Activated CD8-positive, alpha-beta T cell treated with anti-CD3 and anti-CD28 coated beads, Interleukin-2, amount 10 ng/mL, durations not matched to agents 7 days and 5 days (primary cell): ENCODE measurements at regions of chr21 and their contacts with region 1.

Region 1: DNA sequence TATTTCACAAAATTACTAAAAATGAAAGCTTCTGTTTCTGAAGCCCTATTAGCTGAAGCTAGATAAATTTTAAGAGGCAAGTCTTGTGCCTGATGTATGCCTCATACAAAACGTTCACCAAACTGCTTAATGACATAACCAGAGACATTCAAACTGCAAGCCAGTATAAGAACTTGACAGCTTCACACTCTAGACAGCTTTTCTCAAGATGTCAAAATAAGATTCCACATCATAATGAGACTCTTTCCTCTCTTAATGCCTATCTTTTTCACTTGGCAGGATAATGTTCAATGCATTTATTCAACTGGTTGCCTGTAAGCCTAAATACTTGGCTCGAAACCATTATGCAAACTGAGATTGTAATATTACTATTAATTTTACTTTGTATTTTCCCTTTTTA is 424.0 kb downstream of the LTN1 start:
- DNase-seq: no peak
- ATAC-seq: no peak
- H3K4me3 Mint-ChIP-seq: no peak overlapping the region
- H3K27ac Mint-ChIP-seq: no peak overlapping the region
- H3K4me1 Mint-ChIP-seq: no peaks in the 10 kb centered on the region
- H3K27me3 Mint-ChIP-seq: no peaks in the 10 kb centered on the region

Region 2: DNA sequence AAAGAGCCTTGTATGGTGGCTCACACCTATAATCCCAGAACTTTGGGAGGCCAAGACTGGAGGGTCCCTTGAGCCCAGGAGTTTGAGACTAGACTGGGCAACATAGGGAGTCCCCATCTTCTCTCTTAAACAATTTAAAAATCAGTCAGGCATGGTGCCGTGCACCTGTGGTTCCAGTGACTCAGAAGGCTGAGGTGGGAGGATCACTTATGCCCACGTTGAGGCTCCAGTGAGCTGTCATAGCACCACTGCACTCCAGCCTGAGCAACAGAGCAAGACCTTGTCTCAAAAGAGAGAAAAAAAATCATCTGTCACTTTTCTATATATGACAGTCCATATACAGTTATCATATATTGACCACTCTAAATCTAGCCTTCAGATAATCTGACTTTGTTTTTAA is 234.3 kb before region 1 on chr21:
- CTCF ChIA-PET with region 1: no interaction called
- POLR2A ChIA-PET with region 1: interaction called, 11 read pairs
- DNase-seq: no peak
- ATAC-seq: no peak
- H3K4me3 Mint-ChIP-seq: no peak overlapping the region
- H3K27ac Mint-ChIP-seq: no peak overlapping the region
- H3K4me1 Mint-ChIP-seq: no peaks in the 10 kb centered on the region
- H3K27me3 Mint-ChIP-seq: no peaks in the 10 kb centered on the region